ENCODE measurements at regions of chr7 and their contacts with region 1.

Region 1: GRCh38 chr7:38070718-38071117 is 107.3 kb upstream of the STARD3NL start:
- DNase-seq: no peak
- H3K4me3 ChIP-seq: no peak overlapping the region
- CTCF ChIP-seq: no peak
- POLR2A ChIP-seq: no peak

Region 2: DNA sequence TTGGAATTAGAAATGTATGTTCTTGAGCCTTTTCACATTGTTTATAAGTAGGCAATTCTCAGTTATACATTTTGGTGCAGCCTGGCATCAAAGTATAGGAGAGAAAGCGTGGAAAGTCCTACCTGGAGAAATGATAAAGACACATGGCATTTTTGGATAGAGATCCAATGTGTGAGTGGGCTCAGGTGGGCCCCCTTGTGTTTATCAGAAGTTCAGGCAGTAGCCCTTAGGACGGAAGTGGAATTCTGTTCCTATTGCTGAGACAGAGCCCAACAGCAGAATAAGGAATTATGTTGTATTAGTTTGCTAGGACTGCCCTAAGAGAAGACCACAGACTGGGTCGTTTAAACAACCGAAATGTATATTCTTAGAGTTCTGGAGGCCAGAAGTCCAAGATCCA is 645.7 kb after region 1 on chr7:
- intact Hi-C with region 1: loop called (anchors 10 kb)
- DNase-seq: no peak
- H3K4me3 ChIP-seq: no peak overlapping the region
- CTCF ChIP-seq: no peak
- POLR2A ChIP-seq: no peak

Measured in lower leg skin (tissue), 4 donors.